Body of pancreas (tissue), 4 donors: ENCODE measurements at regions of chr16 and their contacts with region 1.

Region 1: DNA sequence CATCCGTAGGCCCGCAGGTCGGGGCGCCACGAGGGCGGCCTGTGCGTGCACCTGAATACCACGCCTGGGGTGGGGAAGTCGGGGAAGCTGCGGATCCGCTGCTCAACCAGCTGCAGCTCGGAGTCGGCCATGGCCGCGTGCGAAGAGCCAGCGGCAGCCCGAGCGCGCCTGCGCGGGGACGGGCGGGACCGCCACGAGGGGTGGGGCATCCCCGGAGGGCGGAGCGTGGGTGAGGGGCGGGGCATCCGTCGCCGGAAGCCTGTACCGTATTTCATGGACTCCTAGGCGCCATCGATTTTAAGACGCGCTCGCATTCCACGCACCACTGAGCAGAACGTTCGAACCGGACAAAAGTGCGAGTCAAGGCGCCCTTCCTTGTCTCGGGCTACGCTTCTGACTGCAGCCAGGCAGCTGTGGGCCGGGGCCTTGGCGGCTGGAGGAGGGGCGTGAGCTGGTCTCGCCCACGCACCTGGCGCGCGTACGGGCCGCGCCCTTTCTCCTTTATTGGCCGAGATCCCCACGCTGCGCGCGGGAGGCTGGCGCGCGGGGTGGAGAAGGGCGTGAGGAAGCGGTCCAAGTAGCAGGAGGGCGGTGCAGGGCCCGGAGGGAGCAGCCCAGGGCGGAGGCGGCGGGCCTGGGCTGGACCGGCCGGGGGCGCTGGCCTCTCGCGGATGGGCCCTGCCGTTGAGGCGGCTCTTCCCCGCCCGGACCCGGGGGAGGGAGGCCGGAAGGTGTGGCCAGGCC is at the start of gene APRT:
- DNase-seq: peak; percentile 94 to 97 (median 95)
- ATAC-seq: peak; percentile 92
- H3K4me3 ChIP-seq: peak within 1 kb of the TSS; percentile 11 to 66
- H3K27ac ChIP-seq: peak within 1 kb of the TSS; percentile 56 to 97 (median 86)
- H3K4me1 ChIP-seq: peaks cover 42% of the 10 kb centered on the region
- H3K27me3 ChIP-seq: no peaks in the 10 kb centered on the region
- CTCF ChIP-seq: peak in 3 of 7 experiments; percentile 15 to 36 (median 31)
- POLR2A ChIP-seq: peak; percentile 72 to 78 (median 76)
- total RNA-seq, gene APRT: 95.9 to 104 TPM

Region 2: DNA sequence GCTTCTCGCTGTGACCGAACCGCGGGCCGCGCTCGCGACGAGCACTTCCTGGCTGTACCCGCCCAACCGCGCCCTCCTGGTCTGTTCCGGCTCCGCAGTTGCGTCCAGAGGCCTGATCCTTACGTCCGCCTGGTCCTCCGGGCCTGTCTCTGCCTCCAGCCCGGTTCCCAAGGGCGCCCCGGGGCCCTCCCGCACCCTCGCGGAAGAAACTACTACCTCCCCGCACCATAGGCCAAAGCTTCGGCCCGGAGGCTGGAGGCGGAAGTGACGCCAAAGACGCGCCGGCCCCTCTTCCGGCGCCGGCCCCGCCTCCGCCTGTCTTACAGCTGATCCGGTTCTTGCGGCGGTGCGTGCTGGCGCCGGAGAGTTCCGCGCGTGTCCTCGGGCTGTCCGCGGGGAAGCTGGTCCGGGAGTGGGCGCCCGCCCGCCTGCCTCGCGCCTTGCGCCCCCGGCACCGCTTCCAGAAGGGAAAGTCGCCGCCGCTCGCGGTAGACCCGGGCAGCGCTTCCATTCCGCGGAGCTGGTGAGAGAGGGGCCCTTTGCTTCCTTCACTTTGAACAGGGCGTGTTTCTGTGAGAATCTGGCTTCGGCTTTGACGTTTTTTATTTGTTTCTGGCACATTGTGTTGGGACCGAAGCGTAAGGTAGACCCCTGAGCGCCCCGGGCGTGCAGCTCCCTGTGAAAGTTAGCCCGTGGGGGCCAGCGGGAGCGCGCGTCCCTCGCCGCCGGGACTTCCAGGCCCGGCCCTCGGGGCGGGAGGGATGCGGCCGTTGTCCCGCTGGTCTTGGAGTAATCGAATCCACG is 405.6 kb after region 1 on chr16 and contains the start of gene ZNF778:
- intact Hi-C with region 1: loop called (anchors 10 kb)
- DNase-seq: peak; percentile 80 to 87 (median 82)
- ATAC-seq: peak; percentile 90
- H3K4me3 ChIP-seq: peak within 1 kb of the TSS; percentile 75 to 78
- H3K27ac ChIP-seq: peak within 1 kb of the TSS; percentile 73 to 97 (median 92)
- H3K4me1 ChIP-seq: peaks cover 26% of the 10 kb centered on the region
- H3K27me3 ChIP-seq: no peaks in the 10 kb centered on the region
- CTCF ChIP-seq: peak in 2 of 7 experiments; percentile 3 to 11
- POLR2A ChIP-seq: peak; percentile 51 to 83 (median 80)
- total RNA-seq, gene ZNF778: 4.9 to 5.6 TPM